ENCODE measurements at regions of chr21 and their contacts with region 1.

Region 1: GRCh38 chr21:14864211-14865021 is 200.4 kb downstream of the NRIP1 start:
- DNase-seq: peak; percentile 64 to 96 (median 78)

Region 2: DNA sequence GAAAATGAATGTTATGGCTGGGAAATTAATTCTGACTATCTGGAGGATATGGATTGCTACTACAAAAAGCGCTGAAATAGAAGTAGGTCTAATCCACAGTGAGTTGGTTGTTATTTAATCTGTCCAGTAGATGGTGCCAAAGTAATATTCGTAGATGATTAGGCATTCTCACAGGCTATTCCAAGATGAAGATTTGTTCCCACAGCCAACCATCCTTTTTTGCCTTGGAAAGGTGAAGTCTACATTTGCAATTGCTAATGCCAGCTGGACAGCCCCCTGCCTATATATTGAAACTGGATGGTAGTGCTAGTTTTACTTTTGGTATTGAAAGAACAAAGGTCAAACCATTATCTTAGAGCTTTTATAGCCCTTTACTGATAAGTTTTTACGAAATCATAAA is 604.7 kb before region 1 on chr21:
- intact Hi-C with region 1: loop called (anchors 5 kb)
- DNase-seq: no peak

Region 3: DNA sequence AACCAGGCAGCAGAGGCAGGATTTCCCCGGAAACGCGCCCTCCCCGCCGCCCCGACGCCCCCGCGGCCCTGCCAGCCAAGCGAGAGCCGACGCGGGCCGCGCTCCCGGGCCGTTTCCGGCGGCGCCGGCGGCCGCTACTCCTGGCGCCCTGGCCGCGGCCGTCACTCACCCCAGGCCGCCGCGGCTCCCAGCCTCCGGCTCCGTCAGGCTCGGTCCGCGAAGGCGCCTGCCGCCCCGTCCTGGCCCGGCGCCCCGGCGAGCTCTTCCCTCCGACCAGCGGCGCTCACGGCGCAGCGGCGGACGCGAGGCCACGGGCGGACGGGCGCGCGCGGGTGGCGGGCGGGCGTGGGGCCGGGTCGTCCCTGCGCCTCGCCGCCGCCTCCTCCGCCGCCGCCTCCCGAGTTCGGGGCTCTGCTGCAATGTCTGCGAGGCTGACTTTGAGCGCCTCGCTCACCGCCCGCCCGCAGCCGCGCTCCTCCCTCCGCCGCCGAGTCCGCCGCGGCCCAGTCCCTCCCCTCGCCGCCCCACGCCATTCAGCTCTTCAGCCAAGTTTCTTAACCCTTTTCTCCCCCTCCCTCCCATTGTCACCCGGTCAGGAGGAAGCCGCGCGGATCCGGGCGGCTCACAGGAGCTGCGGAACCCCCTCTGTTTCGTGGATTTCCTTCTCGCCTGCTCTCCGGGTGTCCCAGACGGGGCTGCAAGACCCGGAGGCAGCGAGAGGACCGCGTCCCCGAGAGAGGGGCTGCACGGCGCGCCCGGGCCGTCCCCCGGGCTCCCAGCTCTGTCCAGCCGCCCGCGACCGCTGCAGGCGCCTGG is 200.4 kb after region 1 on chr21 and contains the start of gene NRIP1:
- intact Hi-C with region 1: loop called (anchors 5 kb)
- DNase-seq: peak; percentile 80 to 98 (median 88)